ENCODE measurements at regions of chr17 and their contacts with region 1.

Region 1: DNA sequence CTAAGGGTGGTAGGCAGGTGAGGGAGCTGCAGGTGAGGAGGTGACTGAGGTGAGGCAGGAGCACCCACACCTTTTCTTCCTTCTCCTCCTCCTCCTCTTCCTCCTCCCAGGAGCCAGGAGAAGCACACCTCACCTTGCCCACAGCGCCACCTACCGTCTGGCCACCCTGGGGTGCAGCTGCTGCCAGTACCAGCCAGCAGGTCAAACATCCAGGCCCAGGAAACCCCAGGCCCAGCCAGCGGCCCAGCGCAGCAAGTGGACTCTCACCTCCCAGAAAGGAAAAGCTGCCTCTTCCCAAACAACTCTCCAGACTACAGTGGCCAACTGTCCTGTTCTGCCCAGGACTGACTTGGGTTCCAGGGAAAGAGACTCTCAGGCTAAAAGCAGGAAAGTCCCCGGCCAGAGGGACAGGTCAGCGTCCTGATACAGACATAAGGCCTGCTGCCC is 22.7 kb downstream of the PEMT start:
- DNase-seq: peak; percentile 64 to 95
- ATAC-seq: peak; percentile 58 to 86; a peak in 5 of 6 replicates
- H3K4me3 ChIP-seq: no peak overlapping the region
- H3K27ac ChIP-seq: no peak overlapping the region
- H3K4me1 ChIP-seq: no peaks in the 10 kb centered on the region
- CTCF ChIP-seq: peak; percentile 84
- EP300 ChIP-seq: no peak
- POLR2A ChIP-seq: no peak
- RAD21 ChIP-seq: peak; percentile 80 to 81

Region 2: DNA sequence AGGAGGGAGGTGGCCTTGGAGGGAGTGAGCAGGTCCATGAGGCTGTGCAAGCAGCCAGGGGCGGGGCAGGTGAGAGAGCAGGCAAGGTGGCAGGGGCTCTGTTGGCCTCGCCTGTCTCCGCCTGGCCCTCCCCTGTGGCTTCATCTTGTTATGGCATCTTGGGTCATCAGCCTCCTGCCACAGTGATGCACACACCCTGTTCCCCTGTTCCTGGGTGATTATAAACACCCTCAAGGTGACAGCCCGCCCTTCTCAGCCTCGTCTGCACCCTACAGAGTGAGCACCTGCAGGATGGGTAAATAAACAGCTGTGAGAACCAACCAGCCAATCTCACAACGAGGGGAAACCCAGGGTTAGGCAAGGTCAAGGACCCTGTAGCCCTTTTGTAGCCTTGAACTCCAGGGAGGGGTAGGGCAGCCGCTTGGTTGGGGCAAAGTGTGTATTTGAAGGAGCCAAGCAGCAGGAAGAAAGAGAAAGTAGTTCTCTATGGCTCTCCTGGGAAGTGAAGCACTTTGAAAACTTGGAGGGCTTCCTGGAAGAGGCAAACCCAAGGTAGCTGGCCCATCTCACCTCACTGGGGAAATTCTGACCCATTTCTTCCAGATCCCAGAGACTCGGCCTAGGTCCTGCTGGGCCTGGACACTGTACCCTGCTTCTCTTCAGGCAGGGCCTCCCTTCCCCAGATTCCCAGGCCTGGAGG is 205.0 kb before region 1 on chr17:
- CTCF ChIA-PET with region 1: interaction called, 38 read pairs
- POLR2A ChIA-PET with region 1: no interaction called
- DNase-seq: no peak
- ATAC-seq: peak; percentile 12 to 27; a peak in 2 of 6 replicates
- H3K4me3 ChIP-seq: no peak overlapping the region
- H3K27ac ChIP-seq: no peak overlapping the region
- H3K4me1 ChIP-seq: no peaks in the 10 kb centered on the region
- CTCF ChIP-seq: no peak
- EP300 ChIP-seq: no peak
- POLR2A ChIP-seq: no peak
- RAD21 ChIP-seq: no peak

Region 3: GRCh38 chr17:17479209-17479608 is 89.6 kb before region 1 on chr17:
- CTCF ChIA-PET with region 1: no interaction called
- POLR2A ChIA-PET with region 1: no interaction called
- DNase-seq: no peak
- ATAC-seq: no peak
- H3K4me3 ChIP-seq: no peak overlapping the region
- H3K27ac ChIP-seq: no peak overlapping the region
- H3K4me1 ChIP-seq: peaks cover 17% of the 10 kb centered on the region
- CTCF ChIP-seq: no peak
- EP300 ChIP-seq: no peak
- POLR2A ChIP-seq: no peak
- RAD21 ChIP-seq: no peak

Region 4: DNA sequence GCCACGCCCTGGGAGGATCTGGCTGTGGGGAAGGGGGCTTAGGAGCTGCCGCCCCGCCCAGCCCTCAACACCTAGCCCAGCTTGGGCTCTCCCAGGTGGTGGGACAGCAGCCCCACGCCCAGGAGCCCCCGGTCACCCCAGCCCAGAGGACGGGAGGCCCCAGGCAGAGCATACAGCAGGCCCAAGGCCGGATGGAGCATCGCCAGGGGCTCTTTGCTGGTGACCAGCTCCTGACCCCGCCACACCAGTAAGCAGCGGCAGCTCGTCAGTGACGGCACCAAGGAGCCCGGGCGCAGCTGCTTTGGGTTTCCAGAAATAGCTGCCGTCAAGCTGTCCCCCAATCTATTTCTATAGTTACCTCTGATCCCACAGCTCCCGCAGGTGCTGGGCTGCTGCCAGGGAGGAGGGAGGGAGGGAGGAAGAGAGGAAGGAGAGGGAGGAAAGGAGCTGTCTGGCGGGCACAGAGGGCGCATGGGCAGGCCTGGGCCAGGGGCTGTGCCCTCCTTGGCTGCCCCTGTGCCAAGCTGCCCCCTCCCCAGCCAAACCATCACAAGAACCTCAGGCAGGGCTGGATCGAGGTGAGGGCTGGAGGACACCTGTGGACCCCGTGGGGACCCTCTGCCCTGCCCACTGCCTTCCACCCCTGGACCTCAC is 61.8 kb before region 1 on chr17:
- CTCF ChIA-PET with region 1: interaction called, 254 read pairs
- POLR2A ChIA-PET with region 1: no interaction called
- DNase-seq: no peak
- ATAC-seq: no peak
- H3K4me3 ChIP-seq: no peak overlapping the region
- H3K27ac ChIP-seq: no peak overlapping the region
- H3K4me1 ChIP-seq: peaks cover 11% of the 10 kb centered on the region
- CTCF ChIP-seq: no peak
- EP300 ChIP-seq: no peak
- POLR2A ChIP-seq: no peak
- RAD21 ChIP-seq: no peak

Region 5: DNA sequence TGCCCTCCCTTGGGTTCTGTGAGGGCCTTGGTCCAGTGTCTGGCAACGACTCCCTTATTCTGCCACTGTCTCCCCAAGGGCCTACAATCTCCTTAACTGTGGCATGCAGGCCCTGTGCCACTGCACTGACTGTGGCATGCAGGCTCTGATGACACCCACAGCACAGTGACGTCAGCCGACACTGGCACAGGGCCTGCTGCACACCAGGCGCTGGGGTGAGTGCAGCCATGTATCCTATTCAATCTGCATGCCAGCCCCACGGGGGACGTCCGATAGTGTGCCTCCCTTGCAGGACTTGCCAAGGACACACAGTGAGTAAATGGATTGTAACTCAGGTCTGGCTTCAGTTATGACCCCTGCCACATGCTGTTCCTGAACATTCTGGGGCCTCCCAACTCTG is 32.8 kb before region 1 on chr17:
- CTCF ChIA-PET with region 1: interaction called, 81 read pairs
- POLR2A ChIA-PET with region 1: no interaction called
- DNase-seq: peak; percentile 80 to 81
- ATAC-seq: peak; percentile 69 to 75
- H3K4me3 ChIP-seq: no peak overlapping the region
- H3K27ac ChIP-seq: peak overlapping the region; percentile 76 to 87
- H3K4me1 ChIP-seq: peaks cover 56% of the 10 kb centered on the region
- CTCF ChIP-seq: no peak
- EP300 ChIP-seq: peak; percentile 34 to 67; a peak in 3 of 5 replicates
- POLR2A ChIP-seq: no peak
- RAD21 ChIP-seq: no peak

Region 6: DNA sequence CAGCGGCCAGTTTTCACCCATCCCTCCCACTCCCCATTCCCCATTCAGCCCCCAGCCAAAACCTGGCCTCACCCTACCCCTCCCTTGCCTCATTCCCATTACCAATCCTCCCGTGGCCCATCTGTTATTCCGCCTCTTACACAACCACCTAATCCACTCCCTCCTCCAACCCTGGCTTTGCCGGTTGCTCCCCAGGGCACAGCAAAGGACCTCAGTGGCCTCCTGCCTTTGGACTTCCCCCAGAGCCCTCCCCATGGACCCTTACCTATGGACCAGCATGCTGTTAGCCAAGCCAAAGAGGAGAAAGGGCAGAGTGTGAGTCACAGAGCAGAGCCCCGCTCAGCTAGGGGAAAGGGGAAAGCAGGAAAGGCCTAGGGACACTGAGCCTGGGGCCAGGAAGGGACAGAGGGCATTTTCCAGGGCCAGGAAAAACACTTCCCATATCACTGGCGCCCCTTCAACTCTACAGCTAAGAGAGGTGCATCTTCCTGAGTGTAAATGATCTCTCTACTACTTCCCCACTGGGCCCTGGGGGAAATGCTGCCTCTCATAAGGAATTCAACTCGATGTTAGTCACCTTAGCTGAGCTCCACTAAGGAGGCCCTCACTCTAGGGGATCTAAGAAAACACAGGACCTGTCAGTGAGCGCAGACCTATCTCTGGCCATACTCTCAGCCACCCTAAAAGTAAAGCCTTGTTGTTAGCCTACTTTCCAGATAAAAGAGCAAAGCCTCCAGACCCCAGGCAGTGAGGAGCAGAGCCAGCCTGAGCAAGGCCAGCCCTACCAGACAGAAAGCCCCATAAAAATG is 12.1 kb after region 1 on chr17:
- CTCF ChIA-PET with region 1: interaction called, 80 read pairs
- POLR2A ChIA-PET with region 1: no interaction called
- DNase-seq: no peak
- ATAC-seq: peak; percentile 31 to 68; a peak in 5 of 6 replicates
- H3K4me3 ChIP-seq: no peak overlapping the region
- H3K27ac ChIP-seq: peak overlapping the region in 1 of 2 experiments; percentile 40; a peak in 3 of 6 replicates
- H3K4me1 ChIP-seq: peaks cover 10% of the 10 kb centered on the region
- CTCF ChIP-seq: no peak
- EP300 ChIP-seq: no peak
- POLR2A ChIP-seq: no peak
- RAD21 ChIP-seq: no peak

Region 7: GRCh38 chr17:17641621-17642409 is 73.0 kb after region 1 on chr17:
- CTCF ChIA-PET with region 1: interaction called, 36 read pairs
- POLR2A ChIA-PET with region 1: no interaction called
- DNase-seq: peak; percentile 70 to 85
- ATAC-seq: peak; percentile 85 to 96
- H3K4me3 ChIP-seq: no peak overlapping the region
- H3K27ac ChIP-seq: no peak overlapping the region
- H3K4me1 ChIP-seq: no peaks in the 10 kb centered on the region
- CTCF ChIP-seq: peak; percentile 97
- EP300 ChIP-seq: no peak
- POLR2A ChIP-seq: no peak
- RAD21 ChIP-seq: peak; percentile 97 to 99